HEK293 (cell line): ENCODE measurements at regions of chr9 and their contacts with region 1.

Region 1: DNA sequence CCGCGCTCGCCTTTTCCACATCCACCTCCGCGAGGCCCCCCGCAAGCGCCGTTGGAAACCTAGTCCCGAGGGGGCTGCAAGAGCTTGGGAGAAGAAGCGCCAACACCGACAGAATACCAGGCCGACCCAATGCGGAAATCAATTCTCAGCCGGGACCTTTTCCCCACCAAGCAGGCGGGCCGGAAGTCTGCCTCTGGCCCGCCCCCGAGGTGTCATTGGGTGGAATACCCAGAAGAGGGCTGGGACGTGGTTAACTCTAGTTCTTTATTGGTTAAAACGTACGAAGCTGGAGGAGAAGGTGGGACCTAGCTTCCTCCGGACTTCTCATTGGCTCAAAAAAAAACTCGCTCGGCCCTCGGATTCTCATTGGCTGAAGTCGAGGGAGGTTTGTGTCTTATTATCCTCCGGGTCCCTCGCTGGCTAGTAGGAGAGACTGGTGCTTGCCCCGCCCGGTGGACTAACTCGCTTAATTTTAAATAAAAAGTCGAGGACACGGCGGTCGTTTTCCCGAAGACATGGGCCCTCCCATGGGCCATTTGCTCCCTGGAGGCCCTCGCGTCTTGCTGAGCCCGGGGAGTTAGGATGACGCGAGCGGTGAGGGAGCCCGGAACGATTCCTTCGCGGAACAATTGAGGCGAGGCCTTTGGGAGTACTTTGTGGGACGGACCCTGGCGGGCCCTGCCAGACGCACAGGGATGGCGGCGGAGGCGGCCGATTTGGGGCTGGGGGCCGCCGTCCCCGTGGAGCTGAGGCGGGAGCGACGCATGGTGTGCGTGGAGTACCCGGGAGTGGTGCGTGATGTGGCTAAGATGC is at the start of gene GTF3C5:
- H3K4me3 ChIP-seq: peak within 1 kb of the TSS; percentile 75
- H3K27ac ChIP-seq: peak within 1 kb of the TSS; percentile 35; the same call in 1 of the 2 replicates
- H3K4me1 ChIP-seq: no peaks in the 10 kb centered on the region
- CTCF ChIP-seq: peak; percentile 46

Region 2: GRCh38 chr9:132877824-132878694 is 152.5 kb before region 1 on chr9 and contains the start of gene AK8:
- CTCF ChIA-PET with region 1: no interaction called
- POLR2A ChIA-PET with region 1: no interaction called
- H3K4me3 ChIP-seq: peak within 1 kb of the TSS; percentile 73
- H3K27ac ChIP-seq: peak within 1 kb of the TSS; percentile 10; the same call in 1 of the 2 replicates
- H3K4me1 ChIP-seq: no peaks in the 10 kb centered on the region
- CTCF ChIP-seq: no peak

Region 3: GRCh38 chr9:132944302-132945185 is 86.0 kb before region 1 on chr9 and contains the start of gene TSC1:
- CTCF ChIA-PET with region 1: interaction called, 3 read pairs
- POLR2A ChIA-PET with region 1: interaction called, 14 read pairs
- H3K4me3 ChIP-seq: peak within 1 kb of the TSS; percentile 97
- H3K27ac ChIP-seq: peak within 1 kb of the TSS; percentile 98
- H3K4me1 ChIP-seq: peaks cover 14% of the 10 kb centered on the region
- CTCF ChIP-seq: no peak

Region 4: DNA sequence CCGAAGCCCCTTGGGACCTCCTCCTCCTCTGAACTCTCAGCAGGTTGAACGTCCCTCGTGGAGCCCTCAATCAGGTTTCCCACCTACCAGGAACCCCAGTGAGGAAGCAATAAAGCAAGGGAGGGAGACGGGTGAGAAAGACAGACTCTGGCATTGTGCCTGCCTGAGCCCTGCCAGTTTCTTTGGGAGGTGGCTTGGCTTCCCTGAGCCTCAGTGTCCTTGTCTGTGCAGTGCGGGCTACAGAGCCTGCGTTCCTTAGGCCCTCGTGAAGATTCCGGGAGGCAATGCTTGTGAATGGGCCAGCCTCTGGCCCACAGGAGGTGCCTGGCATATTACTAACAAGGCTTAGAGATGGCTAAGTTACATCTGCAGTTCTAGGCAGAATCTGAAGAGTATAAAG is 12.2 kb after region 1 on chr9:
- CTCF ChIA-PET with region 1: interaction called, 16 read pairs
- POLR2A ChIA-PET with region 1: interaction called, 22 read pairs
- H3K4me3 ChIP-seq: no peak overlapping the region
- H3K27ac ChIP-seq: no peak overlapping the region
- H3K4me1 ChIP-seq: no peaks in the 10 kb centered on the region
- CTCF ChIP-seq: no peak

Region 5: GRCh38 chr9:133108794-133109641 is 78.5 kb after region 1 on chr9:
- CTCF ChIA-PET with region 1: no interaction called
- POLR2A ChIA-PET with region 1: interaction called, 20 read pairs
- H3K4me3 ChIP-seq: no peak overlapping the region
- H3K27ac ChIP-seq: no peak overlapping the region
- H3K4me1 ChIP-seq: peaks cover 1% of the 10 kb centered on the region; the same call in 1 of the 2 replicates
- CTCF ChIP-seq: no peak

Region 6: DNA sequence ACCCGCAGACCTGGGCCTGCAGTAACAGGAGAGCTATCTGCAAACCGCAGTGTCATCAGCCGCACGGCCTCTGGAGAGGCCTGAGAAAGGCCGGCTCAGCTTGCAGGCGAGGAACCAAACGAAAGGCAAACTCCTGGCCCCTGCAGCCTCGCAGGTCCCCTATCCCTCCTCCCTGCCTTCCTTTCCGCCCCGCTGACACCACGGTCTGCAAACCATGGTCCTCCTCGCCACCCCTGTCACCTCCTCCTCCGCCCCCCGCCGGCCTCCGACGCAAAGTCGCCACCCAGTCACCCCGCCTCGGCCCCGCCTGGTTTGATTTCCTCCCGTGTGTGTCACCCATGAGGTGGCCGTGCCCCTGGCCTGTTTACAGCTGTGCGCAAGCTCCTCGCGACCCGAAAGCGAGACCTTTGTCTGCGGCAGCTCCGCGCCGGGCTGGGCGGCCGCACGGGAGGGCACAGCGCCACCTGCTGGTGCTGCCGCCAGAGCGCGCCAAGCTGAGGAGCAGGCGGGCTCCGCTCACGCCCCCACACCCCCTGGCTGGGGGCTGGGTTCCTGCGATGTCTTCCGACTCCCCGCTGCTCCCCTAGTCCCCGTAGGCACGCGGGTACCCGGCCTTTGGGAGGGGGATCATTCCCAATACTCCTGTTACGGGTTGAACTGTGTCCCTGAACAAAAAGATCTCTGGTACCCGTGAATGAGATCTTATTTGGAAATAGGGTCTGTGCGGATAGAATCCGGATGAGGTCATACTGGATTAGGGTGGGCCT is 113.8 kb after region 1 on chr9:
- CTCF ChIA-PET with region 1: interaction called, 117 read pairs
- POLR2A ChIA-PET with region 1: interaction called, 26 read pairs
- H3K4me3 ChIP-seq: peak overlapping the region; percentile 23
- H3K27ac ChIP-seq: no peak overlapping the region; the same call in 1 of the 2 replicates
- H3K4me1 ChIP-seq: peaks cover 3% of the 10 kb centered on the region; the same call in 1 of the 2 replicates
- CTCF ChIP-seq: peak; percentile 99

Region 7: DNA sequence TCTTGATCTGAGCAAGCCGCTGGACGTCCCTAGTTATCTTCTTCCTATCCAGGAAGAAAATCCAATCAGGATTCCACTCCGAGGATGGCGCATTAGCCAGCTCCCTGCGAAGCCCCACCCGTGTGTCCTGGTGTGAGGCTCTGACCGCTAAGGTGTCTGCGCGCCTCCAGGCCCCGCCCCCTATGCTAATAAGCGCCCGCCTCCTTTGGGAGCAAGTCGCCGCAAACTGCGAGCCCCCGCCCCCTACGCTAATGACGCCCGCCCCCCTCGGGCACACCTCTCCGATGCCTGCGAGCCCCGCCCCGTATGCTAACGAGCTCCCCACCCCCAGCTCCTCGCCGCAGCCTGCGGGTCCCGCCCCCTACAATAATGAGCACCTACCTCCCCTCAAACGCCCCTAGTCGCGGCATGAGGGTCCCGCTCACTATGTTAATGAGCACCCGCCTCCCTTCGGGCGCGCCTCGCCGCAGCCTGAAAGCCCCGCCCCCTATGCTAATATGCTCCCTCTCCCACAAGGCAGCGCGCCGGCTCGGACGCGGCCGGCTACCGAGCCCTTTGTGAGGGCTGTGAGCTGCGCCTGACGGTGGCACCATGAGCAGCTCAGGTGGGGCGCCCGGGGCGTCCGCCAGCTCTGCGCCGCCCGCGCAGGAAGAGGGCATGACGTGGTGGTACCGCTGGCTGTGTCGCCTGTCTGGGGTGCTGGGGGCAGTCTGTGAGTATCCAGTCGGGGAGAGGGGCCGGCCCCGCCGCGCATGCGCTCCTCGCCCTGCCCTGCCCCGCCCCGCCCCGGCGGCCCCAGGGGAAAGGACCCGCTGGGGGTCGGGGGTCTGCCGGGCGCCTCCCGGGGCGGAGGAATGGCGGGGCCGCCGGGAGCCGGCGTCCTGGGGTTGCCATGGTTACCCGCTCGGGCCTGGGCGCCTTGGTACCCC is 429.2 kb after region 1 on chr9 and contains the start of gene CACFD1:
- CTCF ChIA-PET with region 1: interaction called, 3 read pairs
- POLR2A ChIA-PET with region 1: interaction called, 12 read pairs
- H3K4me3 ChIP-seq: peak within 1 kb of the TSS; percentile 86
- H3K27ac ChIP-seq: peak within 1 kb of the TSS; percentile 92
- H3K4me1 ChIP-seq: no peaks in the 10 kb centered on the region
- CTCF ChIP-seq: no peak; the same call in 1 of the 2 replicates